ENCODE measurements at regions of chr15 and their contacts with region 1.

Region 1: DNA sequence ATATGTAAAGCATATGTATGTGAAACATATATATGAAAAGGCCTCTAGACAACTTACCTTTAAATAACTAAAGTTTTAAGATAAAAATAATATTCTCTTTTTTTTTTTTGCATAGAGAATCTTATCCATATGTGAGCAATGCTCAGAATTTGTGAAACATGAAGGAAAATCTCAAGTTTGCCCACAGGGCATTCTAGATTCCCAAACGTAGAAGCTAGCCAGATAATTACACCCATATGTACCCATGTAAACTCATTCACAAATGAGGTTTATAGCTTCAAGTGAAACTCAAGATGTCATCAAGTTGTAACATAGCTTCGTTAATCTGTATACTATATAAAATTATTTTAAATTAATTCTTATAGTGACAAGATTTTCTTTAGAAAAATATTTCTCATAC is 537.3 kb upstream of the NR2F2 start:
- DNase-seq: no peak
- ATAC-seq: no peak
- H3K4me3 ChIP-seq: no peak overlapping the region
- H3K27ac ChIP-seq: no peak overlapping the region
- H3K4me1 ChIP-seq: no peaks in the 10 kb centered on the region
- H3K27me3 ChIP-seq: no peaks in the 10 kb centered on the region
- CTCF ChIP-seq: no peak

Region 2: DNA sequence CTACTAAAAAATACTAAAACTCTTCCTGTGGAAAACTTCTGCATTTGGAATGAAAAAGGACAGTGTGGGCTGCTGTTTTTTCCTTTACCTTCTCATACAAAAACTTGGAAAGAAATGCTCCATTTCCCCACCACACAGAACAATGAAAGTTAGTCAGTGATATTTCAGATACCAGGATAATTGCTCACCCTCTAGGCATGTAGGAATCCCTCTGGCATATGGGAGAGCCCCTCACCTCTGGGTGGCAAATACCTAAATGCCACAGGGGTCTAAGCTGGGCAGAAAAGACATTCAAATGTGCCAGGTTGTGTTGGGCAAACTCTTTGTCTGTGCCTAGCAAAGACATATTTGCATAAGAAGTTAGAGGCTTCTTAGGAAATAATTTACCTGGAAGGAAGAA is 23.0 kb before region 1 on chr15:
- CTCF ChIA-PET with region 1: no interaction called
- POLR2A ChIA-PET with region 1: no interaction called
- in situ Hi-C with region 1: no loop called
- intact Hi-C with region 1: no loop called
- DNase-seq: no peak
- ATAC-seq: no peak
- H3K4me3 ChIP-seq: no peak overlapping the region
- H3K27ac ChIP-seq: no peak overlapping the region
- H3K4me1 ChIP-seq: no peaks in the 10 kb centered on the region
- H3K27me3 ChIP-seq: no peaks in the 10 kb centered on the region
- CTCF ChIP-seq: no peak

Region 3: GRCh38 chr15:95812491-95812890 is 19.3 kb after region 1 on chr15:
- CTCF ChIA-PET with region 1: interaction called, 7 read pairs
- POLR2A ChIA-PET with region 1: interaction called, 13 read pairs
- in situ Hi-C with region 1: no loop called
- intact Hi-C with region 1: no loop called
- DNase-seq: no peak
- ATAC-seq: no peak
- H3K4me3 ChIP-seq: no peak overlapping the region
- H3K27ac ChIP-seq: no peak overlapping the region
- H3K4me1 ChIP-seq: no peaks in the 10 kb centered on the region
- H3K27me3 ChIP-seq: no peaks in the 10 kb centered on the region
- CTCF ChIP-seq: no peak